ENCODE measurements at regions of chr11 and their contacts with region 1.

Region 1: GRCh38 chr11:15208378-15209222 is 93.9 kb downstream of the INSC start:
- DNase-seq: peak; percentile 53
- ATAC-seq: peak; percentile 98
- H3K4me3 ChIP-seq: no peak overlapping the region
- H3K27ac ChIP-seq: no peak overlapping the region
- H3K4me1 ChIP-seq: no peaks in the 10 kb centered on the region
- H3K27me3 ChIP-seq: no peaks in the 10 kb centered on the region
- CTCF ChIP-seq: peak; percentile 95
- POLR2A ChIP-seq: peak; percentile 65
- RAD21 ChIP-seq: peak; percentile 99

Region 2: DNA sequence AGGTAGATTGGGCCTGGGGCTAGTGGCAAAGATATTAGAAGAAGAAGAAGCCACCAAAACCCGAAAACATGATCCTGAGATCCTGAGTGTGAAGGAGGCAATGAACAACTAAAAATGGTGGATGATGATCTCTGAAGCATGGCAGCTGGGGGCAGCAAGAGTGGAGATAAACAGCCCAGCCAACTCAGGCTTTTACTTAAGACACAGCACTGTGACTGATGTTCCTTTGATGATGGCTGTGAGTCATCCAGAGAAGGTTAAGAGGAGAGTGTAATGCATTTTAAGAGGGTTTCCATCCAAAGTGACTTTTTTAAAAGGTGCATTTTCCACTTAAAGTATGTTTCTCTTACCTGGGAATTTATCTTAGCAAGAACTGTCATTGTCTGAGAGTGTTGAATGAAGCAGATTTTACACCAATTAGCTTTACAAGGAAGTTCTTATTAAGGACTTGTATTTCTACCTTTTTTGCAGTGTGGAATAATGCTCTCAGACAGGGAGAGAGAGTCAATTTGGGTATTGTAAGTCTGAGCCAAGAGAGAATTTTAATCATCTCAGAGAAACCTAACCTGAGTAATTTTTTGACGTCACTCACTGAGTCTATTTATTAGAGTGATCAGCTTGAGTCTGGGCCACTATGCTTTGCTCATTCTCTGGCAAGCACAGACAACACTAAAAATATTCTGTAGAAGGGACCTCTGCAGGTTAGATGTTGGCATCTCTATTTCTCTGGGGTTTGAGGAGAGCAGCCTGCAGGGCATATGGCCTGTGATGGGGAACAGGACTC is 149.3 kb before region 1 on chr11:
- CTCF ChIA-PET with region 1: no interaction called
- POLR2A ChIA-PET with region 1: no interaction called
- dilution Hi-C with region 1: no loop called
- in situ Hi-C with region 1: no loop called
- intact Hi-C with region 1: no loop called
- DNase-seq: no peak
- ATAC-seq: no peak
- H3K4me3 ChIP-seq: no peak overlapping the region
- H3K27ac ChIP-seq: no peak overlapping the region
- H3K4me1 ChIP-seq: no peaks in the 10 kb centered on the region
- H3K27me3 ChIP-seq: no peaks in the 10 kb centered on the region
- CTCF ChIP-seq: no peak
- POLR2A ChIP-seq: no peak
- RAD21 ChIP-seq: no peak

Region 3: DNA sequence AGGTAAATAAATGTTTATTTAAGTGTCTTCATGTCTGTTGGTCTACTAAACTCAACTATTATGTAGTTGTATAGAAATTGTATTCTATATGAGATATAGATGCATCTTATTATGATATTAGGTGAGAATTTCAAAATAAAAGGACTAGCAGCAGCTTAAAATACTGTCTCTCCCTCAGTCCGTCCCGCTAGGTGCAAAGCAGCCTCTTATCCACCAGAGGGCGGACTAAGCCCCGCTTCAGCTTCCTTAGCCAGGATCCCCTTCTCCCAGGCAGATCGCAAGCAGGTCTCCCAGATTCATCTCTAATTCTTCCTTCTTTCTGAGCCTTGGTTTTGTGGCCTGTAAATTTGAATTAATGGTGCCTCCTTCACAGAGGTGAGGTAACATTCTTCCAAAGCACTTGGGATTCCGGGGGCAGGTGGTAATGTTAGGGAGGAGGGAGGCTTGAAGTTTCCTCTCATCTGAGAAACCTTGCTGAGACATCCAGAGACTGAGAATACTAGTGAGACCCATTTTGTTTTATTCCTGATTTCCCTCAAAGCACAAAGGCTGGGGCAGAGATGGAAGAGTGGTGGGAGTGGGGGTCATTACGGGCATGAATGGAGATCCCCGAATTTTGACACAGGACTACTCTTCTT is 107.4 kb before region 1 on chr11:
- CTCF ChIA-PET with region 1: interaction called, 21 read pairs
- POLR2A ChIA-PET with region 1: no interaction called
- dilution Hi-C with region 1: no loop called
- in situ Hi-C with region 1: no loop called
- intact Hi-C with region 1: loop called (anchors 1 kb)
- DNase-seq: peak; percentile 73
- ATAC-seq: peak; percentile 95
- H3K4me3 ChIP-seq: no peak overlapping the region
- H3K27ac ChIP-seq: no peak overlapping the region
- H3K4me1 ChIP-seq: peaks cover 10% of the 10 kb centered on the region; the same call in 1 of the 2 replicates
- H3K27me3 ChIP-seq: no peaks in the 10 kb centered on the region; the same call in 1 of the 2 replicates
- CTCF ChIP-seq: peak; percentile 97
- POLR2A ChIP-seq: no peak
- RAD21 ChIP-seq: peak; percentile 99

Region 4: DNA sequence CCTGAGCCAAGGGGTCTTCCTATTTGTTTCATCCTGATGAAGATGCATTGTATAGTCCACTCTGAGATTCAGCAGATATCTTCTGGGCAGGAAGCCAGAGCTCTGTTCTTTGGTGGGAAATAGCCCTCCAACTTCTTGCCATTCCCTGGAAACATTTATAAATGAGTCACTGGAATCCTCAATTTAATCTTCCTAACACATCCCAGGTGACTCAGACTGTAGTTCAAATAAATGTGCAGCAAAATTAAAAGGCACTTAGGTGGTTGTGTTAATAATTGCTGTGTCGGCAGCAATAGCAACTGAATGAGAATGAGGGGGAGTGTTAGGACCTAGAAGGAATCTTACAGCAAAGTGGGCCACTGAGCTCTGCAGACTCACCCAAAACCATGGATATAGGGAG is 14.7 kb after region 1 on chr11:
- CTCF ChIA-PET with region 1: no interaction called
- POLR2A ChIA-PET with region 1: no interaction called
- dilution Hi-C with region 1: no loop called
- in situ Hi-C with region 1: no loop called
- intact Hi-C with region 1: no loop called
- DNase-seq: peak; percentile 4
- ATAC-seq: no peak
- H3K4me3 ChIP-seq: no peak overlapping the region
- H3K27ac ChIP-seq: no peak overlapping the region
- H3K4me1 ChIP-seq: peaks cover 5% of the 10 kb centered on the region; the same call in 1 of the 2 replicates
- H3K27me3 ChIP-seq: peaks cover 2% of the 10 kb centered on the region; the same call in 1 of the 2 replicates
- CTCF ChIP-seq: no peak
- POLR2A ChIP-seq: no peak
- RAD21 ChIP-seq: no peak

Region 5: GRCh38 chr11:15266993-15267392 is 58.4 kb after region 1 on chr11:
- CTCF ChIA-PET with region 1: no interaction called
- POLR2A ChIA-PET with region 1: no interaction called
- dilution Hi-C with region 1: no loop called
- in situ Hi-C with region 1: no loop called
- intact Hi-C with region 1: no loop called
- DNase-seq: no peak
- ATAC-seq: no peak
- H3K4me3 ChIP-seq: no peak overlapping the region
- H3K27ac ChIP-seq: no peak overlapping the region
- H3K4me1 ChIP-seq: no peaks in the 10 kb centered on the region
- H3K27me3 ChIP-seq: no peaks in the 10 kb centered on the region
- CTCF ChIP-seq: no peak
- POLR2A ChIP-seq: no peak
- RAD21 ChIP-seq: no peak

Measured in IMR-90 (cell line).